ENCODE measurements at regions of chr12 and their contacts with region 1.

Region 1: DNA sequence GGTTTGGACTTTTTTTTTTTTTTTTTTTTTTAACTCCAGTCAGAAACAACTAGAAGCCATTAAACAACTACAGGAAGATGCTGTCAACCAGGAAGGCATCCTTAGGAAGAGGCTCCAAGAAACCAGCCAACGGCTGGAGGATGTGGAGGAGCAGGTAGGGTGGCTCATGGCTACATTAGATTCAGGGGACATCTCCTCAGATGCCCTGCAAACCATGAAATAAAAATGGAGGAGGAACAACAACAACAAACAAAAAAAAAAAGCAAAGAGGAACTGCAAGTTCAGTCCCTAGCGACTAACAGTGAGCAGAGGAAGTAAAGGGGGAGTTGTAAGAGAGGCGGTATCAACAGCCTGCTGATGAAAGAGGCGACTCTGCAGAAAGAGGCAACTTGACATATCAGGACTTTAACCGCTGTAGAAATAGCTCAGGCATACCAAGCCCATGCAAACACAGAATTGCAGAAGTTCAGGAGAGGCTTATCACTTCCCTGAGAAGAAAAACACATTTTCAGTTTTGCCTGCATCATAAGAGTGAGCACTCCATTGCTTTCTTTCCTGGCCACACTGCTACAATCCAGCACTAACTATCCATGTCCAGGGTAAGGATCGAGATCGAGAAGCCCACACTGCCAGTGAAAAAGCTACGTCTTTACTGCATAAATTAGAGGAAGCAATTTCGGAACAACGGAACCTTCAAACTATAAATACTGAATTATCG is 103.5 kb upstream of the BCAT1 start:
- DNase-seq: peak; percentile 56
- ATAC-seq: peak; percentile 69
- H3K4me3 Mint-ChIP-seq: peak overlapping the region; percentile 97
- H3K27ac Mint-ChIP-seq: peak overlapping the region; percentile 98
- H3K4me1 Mint-ChIP-seq: peaks cover 42% of the 10 kb centered on the region
- H3K27me3 Mint-ChIP-seq: no peaks in the 10 kb centered on the region

Region 2: DNA sequence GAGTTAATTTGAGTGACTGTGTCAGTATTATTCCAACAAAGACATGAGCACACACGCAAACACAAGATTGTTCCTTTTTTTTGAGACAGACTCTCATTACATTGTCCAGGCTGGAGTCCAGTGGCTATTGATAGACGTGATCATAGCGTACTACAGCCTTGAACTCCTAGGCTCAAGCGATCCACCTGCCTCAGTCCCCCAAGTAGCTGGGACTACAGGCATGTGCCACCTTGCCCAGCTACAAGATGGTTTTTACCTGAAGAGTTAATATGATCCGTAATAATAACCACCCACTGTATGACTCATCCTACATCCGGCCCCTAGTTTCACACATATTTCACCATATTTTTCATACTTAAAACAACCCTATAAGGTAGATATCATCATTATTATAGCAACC is 130.3 kb before region 1 on chr12:
- CTCF ChIA-PET with region 1: no interaction called
- POLR2A ChIA-PET with region 1: interaction called, 3 read pairs
- intact Hi-C with region 1: loop called in 1 of 2 experiments (anchors 5 kb)
- DNase-seq: no peak
- ATAC-seq: peak; percentile 23
- H3K4me3 Mint-ChIP-seq: no peak overlapping the region
- H3K27ac Mint-ChIP-seq: peak overlapping the region; percentile 71
- H3K4me1 Mint-ChIP-seq: peaks cover 41% of the 10 kb centered on the region
- H3K27me3 Mint-ChIP-seq: peaks cover 6% of the 10 kb centered on the region

Region 3: DNA sequence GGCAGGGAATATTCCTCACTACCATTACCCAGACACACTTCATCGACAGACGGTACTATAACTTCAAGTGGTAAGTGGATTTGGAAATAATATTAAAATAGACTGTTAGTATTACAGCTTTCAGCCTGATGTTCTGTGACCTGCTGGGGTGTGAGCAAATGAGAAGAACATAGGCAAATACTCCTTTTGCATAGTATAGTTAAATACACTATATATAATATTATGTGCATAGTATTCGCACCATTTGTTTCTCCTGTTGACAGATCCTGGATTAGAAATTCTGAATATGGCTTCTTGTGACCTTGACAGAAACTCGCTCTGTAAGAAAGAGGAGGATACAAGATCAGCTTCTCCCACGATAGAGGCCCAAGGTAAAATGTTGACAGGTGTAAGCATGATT is 27.0 kb after region 1 on chr12:
- CTCF ChIA-PET with region 1: no interaction called
- POLR2A ChIA-PET with region 1: no interaction called
- intact Hi-C with region 1: no loop called
- DNase-seq: no peak
- ATAC-seq: no peak
- H3K4me3 Mint-ChIP-seq: no peak overlapping the region
- H3K27ac Mint-ChIP-seq: no peak overlapping the region
- H3K4me1 Mint-ChIP-seq: peaks cover 8% of the 10 kb centered on the region
- H3K27me3 Mint-ChIP-seq: no peaks in the 10 kb centered on the region

Region 4: DNA sequence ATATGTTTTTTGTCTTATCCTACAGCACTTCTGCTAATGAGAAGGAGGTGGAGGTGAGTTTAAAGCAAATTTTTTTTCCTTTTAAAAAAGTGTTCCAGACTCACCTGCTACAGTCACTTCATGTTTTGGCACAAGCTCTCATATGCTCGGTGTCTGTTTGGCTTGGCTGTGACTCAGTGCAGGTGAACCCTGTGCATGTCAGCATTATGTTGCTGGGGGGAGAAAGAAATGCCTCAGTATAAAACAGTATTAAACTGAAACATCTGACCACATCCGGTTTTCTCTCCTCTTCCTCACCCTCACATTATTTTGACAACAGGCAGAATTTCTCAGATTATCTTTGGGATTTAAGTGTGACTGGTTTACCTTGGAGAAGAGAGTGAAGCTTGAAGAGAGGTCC is 37.4 kb after region 1 on chr12:
- CTCF ChIA-PET with region 1: interaction called, 4 read pairs
- POLR2A ChIA-PET with region 1: interaction called, 12 read pairs
- intact Hi-C with region 1: loop called (anchors 1 to 2 kb)
- DNase-seq: peak; percentile 44
- ATAC-seq: peak; percentile 91
- H3K4me3 Mint-ChIP-seq: no peak overlapping the region
- H3K27ac Mint-ChIP-seq: peak overlapping the region; percentile 59
- H3K4me1 Mint-ChIP-seq: peaks cover 26% of the 10 kb centered on the region
- H3K27me3 Mint-ChIP-seq: no peaks in the 10 kb centered on the region

Region 5: DNA sequence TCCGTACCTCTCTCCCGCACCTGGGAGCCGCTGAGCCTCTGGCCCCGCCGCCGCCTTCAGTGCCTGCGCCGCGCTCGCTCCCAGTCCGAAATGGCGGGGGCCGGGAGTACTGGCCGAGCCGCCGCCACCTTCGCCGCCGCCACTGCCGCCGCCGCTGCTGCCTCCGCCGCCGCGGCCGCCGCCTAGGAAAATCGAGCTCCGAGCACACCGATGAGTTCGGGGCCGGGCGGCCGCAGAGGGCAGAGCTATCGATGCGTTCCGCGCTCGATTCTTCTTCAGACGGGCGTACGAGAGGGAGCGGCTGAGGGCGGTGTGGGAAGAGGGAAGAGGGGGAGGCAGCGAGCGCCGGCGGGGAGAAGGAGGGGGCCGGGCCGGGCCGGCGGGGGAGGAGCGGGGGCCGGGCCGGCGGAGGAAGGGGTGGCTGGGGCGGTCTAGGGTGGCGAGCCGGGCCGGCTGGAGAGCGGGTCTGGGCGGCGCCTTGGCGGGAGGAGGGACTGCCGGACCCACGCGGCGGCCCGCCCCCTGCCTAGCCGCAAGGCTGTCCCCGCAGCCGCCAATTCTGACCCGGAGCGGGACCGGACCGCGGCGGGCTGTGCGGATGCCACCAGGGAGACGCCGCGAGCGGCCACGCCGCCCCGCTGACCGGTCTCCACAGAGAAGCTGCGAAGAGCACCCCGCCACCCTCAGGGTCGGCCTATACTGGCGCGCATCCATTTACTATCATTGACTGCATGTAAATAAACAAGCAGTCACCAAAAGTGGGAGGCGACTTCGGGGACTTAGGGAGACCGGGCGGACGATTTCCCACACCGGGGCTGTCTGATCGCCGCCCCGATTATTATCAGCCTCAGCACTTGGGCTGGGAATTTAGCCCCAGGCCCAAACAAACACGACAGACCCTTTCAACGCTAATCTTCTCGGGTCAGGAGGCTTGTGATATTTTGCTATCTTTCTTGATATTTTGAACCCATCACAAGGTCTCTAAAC is 198.7 kb after region 1 on chr12 and contains the start of gene KRAS:
- CTCF ChIA-PET with region 1: no interaction called
- POLR2A ChIA-PET with region 1: no interaction called
- intact Hi-C with region 1: loop called in 1 of 2 experiments (anchors 2 kb)
- DNase-seq: peak; percentile 95
- ATAC-seq: peak; percentile 87
- H3K4me3 Mint-ChIP-seq: peak within 1 kb of the TSS; percentile 83
- H3K27ac Mint-ChIP-seq: peak within 1 kb of the TSS; percentile 89
- H3K4me1 Mint-ChIP-seq: peaks cover 34% of the 10 kb centered on the region
- H3K27me3 Mint-ChIP-seq: peaks cover 3% of the 10 kb centered on the region
- total RNA-seq, gene KRAS: 11.3 to 15.4 TPM

Region 6: DNA sequence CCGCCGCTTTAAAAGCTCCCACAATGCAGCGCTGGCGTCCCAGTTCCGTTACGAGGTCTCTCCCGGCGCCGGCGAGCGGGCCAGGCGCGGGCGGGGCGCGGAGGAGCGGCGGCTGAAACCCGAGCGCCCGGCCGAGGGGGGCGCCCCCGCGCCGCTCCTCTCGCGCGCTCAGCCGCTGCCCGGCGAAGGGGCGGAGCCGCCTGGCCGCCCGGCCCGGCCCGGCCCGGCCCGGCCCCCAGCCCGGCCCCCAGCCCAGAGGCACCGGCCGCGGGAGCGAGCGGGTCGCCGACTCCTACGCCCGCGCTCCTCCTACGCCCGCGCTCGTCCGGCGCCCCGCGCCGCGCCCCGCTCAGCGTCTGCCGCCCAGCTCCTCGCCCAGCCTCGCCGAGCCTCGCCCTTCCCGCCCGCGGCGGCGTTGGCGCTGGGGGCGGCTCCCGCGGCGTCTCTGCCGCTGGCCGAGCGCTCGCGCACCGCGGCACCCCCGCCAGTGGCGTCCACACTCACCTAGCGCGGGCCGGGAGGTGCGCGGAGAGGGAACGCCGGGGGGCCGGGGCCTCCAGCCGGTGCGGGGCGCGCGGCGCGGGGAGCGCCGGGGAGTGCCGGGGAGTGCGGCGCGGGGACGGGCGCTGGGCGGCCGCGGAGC is 906.2 kb after region 1 on chr12 and contains the start of gene RASSF8:
- CTCF ChIA-PET with region 1: no interaction called
- POLR2A ChIA-PET with region 1: no interaction called
- intact Hi-C with region 1: loop called in 1 of 2 experiments (anchors 5 kb)
- DNase-seq: peak; percentile 49
- ATAC-seq: peak; percentile 72
- H3K4me3 Mint-ChIP-seq: peak within 1 kb of the TSS; percentile 71
- H3K27ac Mint-ChIP-seq: peak within 1 kb of the TSS; percentile 10
- H3K4me1 Mint-ChIP-seq: peaks cover 10% of the 10 kb centered on the region
- H3K27me3 Mint-ChIP-seq: peaks cover 40% of the 10 kb centered on the region
- total RNA-seq, gene RASSF8: 1.2 to 1.3 TPM

Measured in activated CD4-positive, alpha-beta T cell treated with anti-CD3 and anti-CD28 coated beads for 36 hours (primary cell).